Mammary epithelial cell (primary cell): ENCODE measurements at regions of chr1 and their contacts with region 1.

Region 1: GRCh38 chr1:168082008-168082876 is 54.5 kb downstream of the GPR161 start:
- DNase-seq: peak; percentile 64
- H3K4me3 ChIP-seq: no peak overlapping the region
- H3K27ac ChIP-seq: no peak overlapping the region
- H3K4me1 ChIP-seq: peaks cover 28% of the 10 kb centered on the region
- H3K27me3 ChIP-seq: no peaks in the 10 kb centered on the region
- CTCF ChIP-seq: peak; percentile 95 to 97

Region 2: GRCh38 chr1:167715157-167715999 is 366.9 kb before region 1 on chr1:
- CTCF ChIA-PET with region 1: interaction called, 3 read pairs
- dilution Hi-C with region 1: no loop called
- in situ Hi-C with region 1: no loop called
- intact Hi-C with region 1: loop called (anchors 2 kb)
- DNase-seq: peak; percentile 83
- H3K4me3 ChIP-seq: peak overlapping the region; percentile 79 to 85 (median 84)
- H3K27ac ChIP-seq: peak overlapping the region; percentile 89
- H3K4me1 ChIP-seq: peaks cover 13% of the 10 kb centered on the region
- H3K27me3 ChIP-seq: no peaks in the 10 kb centered on the region
- CTCF ChIP-seq: peak; percentile 88 to 99

Region 3: GRCh38 chr1:167803358-167804207 is 278.7 kb before region 1 on chr1:
- CTCF ChIA-PET with region 1: no interaction called
- dilution Hi-C with region 1: no loop called
- in situ Hi-C with region 1: no loop called
- intact Hi-C with region 1: loop called (anchors 1 kb)
- DNase-seq: peak; percentile 89
- H3K4me3 ChIP-seq: no peak overlapping the region
- H3K27ac ChIP-seq: no peak overlapping the region
- H3K4me1 ChIP-seq: peaks cover 25% of the 10 kb centered on the region
- H3K27me3 ChIP-seq: no peaks in the 10 kb centered on the region
- CTCF ChIP-seq: peak; percentile 98 to 99

Region 4: DNA sequence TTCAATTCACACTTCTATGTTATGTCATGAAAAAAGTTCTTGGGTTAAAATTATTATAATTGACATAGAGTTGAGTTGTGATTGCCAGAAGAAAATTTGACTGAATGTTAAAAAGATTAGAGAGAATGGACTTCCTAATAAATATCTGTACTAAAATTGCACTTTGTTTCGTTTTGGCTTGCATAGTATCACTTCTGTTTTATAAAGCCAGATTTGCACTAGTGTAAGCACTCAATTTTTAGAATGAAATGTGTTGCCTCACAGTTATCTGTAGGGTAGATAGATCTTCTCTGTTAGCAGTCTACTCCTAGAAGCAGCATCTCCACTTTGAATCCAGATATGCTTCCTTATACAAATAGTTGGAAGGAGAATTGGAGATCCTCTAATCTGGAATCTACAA is 50.2 kb before region 1 on chr1:
- CTCF ChIA-PET with region 1: no interaction called
- dilution Hi-C with region 1: no loop called
- in situ Hi-C with region 1: no loop called
- intact Hi-C with region 1: no loop called
- DNase-seq: no peak
- H3K4me3 ChIP-seq: no peak overlapping the region
- H3K27ac ChIP-seq: no peak overlapping the region
- H3K4me1 ChIP-seq: no peaks in the 10 kb centered on the region
- H3K27me3 ChIP-seq: no peaks in the 10 kb centered on the region
- CTCF ChIP-seq: no peak

Region 5: DNA sequence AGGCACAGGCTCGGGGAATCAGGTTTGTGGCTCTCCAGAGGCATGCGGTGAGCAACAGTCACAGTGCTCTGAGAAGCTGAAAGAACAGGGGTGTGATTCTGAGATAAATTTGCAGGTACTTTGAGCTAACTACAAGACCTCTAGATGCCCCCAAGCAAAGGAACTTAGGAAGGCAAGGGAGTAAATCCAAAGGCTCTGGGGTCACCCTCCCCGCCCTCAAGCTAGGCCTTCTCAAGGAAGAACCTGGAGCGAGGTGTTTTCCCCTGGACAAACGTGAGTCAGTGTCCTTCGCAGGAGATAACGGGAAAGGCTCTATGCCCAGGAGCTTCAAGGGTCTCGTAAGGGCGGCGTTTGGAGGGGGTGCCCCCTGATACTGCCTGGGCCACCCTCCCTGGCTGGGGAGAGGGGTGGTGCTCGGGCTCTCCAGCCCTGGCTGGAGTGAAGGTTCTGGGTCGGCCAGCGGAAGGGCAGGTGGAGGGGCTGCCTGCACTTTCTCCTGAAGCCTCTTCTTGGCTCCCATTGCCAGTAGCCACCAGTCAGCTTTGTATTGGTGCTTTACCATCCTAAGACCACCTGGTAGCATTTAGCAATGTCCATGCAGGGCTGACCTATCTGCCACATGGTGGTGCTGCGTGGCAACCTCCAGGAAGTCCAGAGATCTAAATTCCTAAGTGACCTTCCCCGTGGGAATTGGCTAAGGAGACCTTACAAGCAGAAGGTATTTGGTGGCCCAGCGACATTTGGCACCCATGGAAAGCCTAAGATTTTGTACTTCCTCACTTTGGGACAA is 10.5 kb after region 1 on chr1:
- CTCF ChIA-PET with region 1: no interaction called
- dilution Hi-C with region 1: no loop called
- in situ Hi-C with region 1: no loop called
- intact Hi-C with region 1: no loop called
- DNase-seq: no peak
- H3K4me3 ChIP-seq: no peak overlapping the region
- H3K27ac ChIP-seq: no peak overlapping the region
- H3K4me1 ChIP-seq: no peaks in the 10 kb centered on the region
- H3K27me3 ChIP-seq: no peaks in the 10 kb centered on the region
- CTCF ChIP-seq: peak; percentile 18 to 43

Region 6: DNA sequence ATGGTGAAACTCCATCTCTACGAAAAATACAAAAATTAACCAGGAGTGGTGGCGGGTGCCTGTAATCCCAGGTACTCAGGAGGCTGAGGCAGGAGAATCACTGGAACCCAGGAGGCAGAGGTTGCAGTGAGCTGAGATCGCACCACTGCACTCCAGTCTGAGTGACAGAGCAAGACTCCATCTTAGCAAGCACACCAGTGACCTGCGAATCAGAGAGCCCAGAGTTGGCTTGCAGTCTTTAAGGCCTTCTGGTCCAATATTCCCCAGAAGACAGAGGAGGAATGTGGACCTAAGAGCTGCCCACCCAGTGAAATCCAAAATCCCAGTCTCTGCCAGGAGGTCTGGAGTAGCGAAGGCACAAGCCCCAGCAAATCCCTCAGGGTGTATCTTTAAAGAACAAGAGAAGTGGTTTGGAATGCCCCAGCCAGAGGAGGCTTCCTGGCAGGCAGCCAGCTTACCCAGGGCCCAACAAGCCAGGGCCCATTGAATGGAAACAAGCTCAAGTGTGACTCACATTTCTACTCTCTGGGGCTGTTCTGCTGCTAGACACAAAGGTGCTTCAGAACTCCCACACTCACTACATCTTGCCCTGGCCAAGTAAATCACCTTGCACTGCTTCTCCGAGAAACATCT is 30.5 kb after region 1 on chr1:
- CTCF ChIA-PET with region 1: no interaction called
- dilution Hi-C with region 1: no loop called
- in situ Hi-C with region 1: no loop called
- intact Hi-C with region 1: no loop called
- DNase-seq: peak; percentile 99
- H3K4me3 ChIP-seq: no peak overlapping the region
- H3K27ac ChIP-seq: peak overlapping the region; percentile 71
- H3K4me1 ChIP-seq: peaks cover 37% of the 10 kb centered on the region
- H3K27me3 ChIP-seq: no peaks in the 10 kb centered on the region
- CTCF ChIP-seq: no peak

Region 7: DNA sequence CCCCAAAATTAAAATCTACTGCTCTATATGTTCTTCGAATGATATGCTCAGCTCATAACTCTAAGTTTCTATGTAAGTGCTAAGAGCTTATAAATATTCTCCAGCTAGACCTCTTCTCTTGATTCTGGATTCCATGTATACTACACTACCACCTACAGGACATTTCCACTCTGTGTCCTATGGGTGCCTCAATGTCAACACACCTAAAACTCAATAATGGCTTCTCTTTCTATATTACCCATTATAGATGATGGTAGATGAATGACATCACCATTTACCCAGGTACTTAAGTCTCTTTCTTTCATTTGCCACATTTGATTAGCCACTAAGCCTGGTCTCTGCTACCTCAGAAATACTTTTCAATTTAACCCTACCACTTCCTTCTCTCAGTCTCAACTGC is 239.7 kb after region 1 on chr1:
- CTCF ChIA-PET with region 1: interaction called, 5 read pairs
- dilution Hi-C with region 1: no loop called
- in situ Hi-C with region 1: loop called in 1 of 2 experiments (anchors 25 kb)
- intact Hi-C with region 1: loop called (anchors 5 kb)
- DNase-seq: peak; percentile 57
- H3K4me3 ChIP-seq: no peak overlapping the region
- H3K27ac ChIP-seq: no peak overlapping the region
- H3K4me1 ChIP-seq: peaks cover 15% of the 10 kb centered on the region
- H3K27me3 ChIP-seq: no peaks in the 10 kb centered on the region
- CTCF ChIP-seq: peak; percentile 51 to 67